ENCODE measurements at regions of chr1 and their contacts with region 1.

Region 1: GRCh38 chr1:33367485-33368405 is 46.8 kb upstream of the A3GALT2 start:
- H3K4me3 Mint-ChIP-seq: no peak overlapping the region
- H3K27ac Mint-ChIP-seq: peak overlapping the region; percentile 2
- H3K4me1 Mint-ChIP-seq: peaks cover 17% of the 10 kb centered on the region
- H3K27me3 Mint-ChIP-seq: peaks cover 4% of the 10 kb centered on the region

Region 2: GRCh38 chr1:33219881-33220661 is 147.7 kb before region 1 on chr1:
- intact Hi-C with region 1: loop called (anchors 5 kb)
- H3K4me3 Mint-ChIP-seq: no peak overlapping the region
- H3K27ac Mint-ChIP-seq: no peak overlapping the region
- H3K4me1 Mint-ChIP-seq: peaks cover 17% of the 10 kb centered on the region
- H3K27me3 Mint-ChIP-seq: peaks cover 12% of the 10 kb centered on the region

Region 3: DNA sequence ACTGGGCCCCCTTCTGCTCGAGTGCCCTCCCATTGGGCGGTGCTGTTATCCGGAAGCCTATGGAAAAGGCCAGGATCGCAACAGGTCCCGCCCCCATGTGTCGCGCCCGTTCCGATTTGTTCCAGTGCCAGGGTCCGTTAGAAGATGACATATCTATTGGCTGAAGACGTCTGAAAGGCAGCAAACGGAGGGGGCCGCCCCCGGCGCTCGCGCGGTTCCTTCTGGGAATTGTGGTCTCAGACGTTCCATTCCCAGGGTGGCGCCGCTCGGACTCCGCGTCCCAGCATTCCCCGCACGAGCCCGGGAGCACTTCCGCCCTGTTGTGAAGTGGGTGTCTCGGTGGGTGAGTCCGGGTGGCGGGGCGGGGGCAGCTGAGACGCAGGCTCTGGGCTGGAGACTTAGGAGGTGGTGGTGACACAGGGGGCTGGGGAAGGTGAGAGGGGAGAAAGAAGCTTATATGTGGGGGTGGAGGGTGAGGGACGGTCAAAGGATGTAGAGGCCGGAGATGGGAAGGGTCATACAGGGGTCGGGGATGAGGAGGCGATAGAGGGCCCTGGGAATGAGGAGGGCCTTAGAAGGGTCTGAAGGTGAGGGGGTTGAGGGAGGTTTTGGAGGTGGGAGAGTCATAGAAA is 104.7 kb after region 1 on chr1 and contains the start of gene ZSCAN20:
- intact Hi-C with region 1: loop called (anchors 5 kb)
- H3K4me3 Mint-ChIP-seq: peak within 1 kb of the TSS; percentile 82
- H3K27ac Mint-ChIP-seq: peak within 1 kb of the TSS; percentile 81
- H3K4me1 Mint-ChIP-seq: peaks cover 42% of the 10 kb centered on the region
- H3K27me3 Mint-ChIP-seq: peaks cover 8% of the 10 kb centered on the region

Measured in dendritic cell treated with granulocyte-macrophage colony-stimulating factor and Interleukin-4, amounts not matched to agents 40 ng/mL and 50 ng/mL, for 4 days (primary cell).